ENCODE measurements at regions of chr18 and their contacts with region 1.

Region 1: DNA sequence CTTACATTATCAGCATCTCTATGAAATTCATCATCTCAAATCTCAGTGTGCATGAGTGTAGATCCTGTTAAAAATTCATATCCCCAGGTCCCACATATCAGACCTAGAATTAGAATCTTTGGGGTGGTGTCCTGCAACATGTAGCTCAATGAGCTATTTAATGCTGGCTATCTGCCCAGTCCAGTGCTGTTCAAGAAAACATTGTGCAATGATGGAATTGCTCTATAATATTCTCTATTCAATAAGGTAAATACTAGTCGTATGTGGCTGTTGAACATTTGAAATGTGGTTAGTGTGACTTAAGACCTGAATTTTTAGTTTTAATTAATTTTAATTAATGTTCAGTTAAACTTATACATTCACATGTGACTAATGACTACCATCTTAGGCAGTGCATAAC is 127.4 kb downstream of the NOL4 start:
- DNase-seq: no peak
- H3K4me3 Mint-ChIP-seq: no peak overlapping the region
- H3K27ac Mint-ChIP-seq: no peak overlapping the region
- H3K4me1 Mint-ChIP-seq: peaks cover 8% of the 10 kb centered on the region
- H3K27me3 Mint-ChIP-seq: no peaks in the 10 kb centered on the region
- CTCF ChIP-seq: no peak

Region 2: GRCh38 chr18:34061226-34061625 is 36.1 kb before region 1 on chr18:
- CTCF ChIA-PET with region 1: no interaction called
- intact Hi-C with region 1: no loop called
- DNase-seq: no peak
- H3K4me3 Mint-ChIP-seq: no peak overlapping the region
- H3K27ac Mint-ChIP-seq: no peak overlapping the region
- H3K4me1 Mint-ChIP-seq: no peaks in the 10 kb centered on the region
- H3K27me3 Mint-ChIP-seq: no peaks in the 10 kb centered on the region
- CTCF ChIP-seq: no peak

Region 3: DNA sequence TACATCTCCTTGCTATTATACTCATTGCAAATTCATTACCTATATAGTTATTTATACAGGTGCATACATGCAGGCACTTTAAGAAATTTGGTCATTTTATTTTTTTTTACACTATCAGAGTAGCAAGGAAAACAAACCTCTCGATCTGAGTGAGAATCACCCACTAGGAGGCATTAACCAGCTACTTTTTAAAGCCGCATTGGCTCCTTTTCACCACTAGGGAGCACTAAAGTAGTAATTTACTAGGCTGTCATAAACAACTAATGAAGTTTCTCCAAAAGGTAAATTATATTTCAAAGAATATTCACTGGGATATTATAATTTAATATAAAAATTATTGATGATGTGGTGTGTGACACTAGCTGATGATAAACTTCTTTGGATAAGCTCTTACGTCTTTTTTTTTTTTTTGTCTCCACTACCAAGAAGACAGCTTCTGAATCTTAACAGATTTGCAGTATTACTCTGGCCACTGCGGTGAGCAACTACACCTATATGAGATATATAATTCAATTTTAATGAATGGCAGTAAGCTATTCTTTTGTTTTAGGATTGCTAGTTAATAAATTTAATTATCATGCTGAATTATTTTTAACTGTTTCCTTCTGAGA is 25.5 kb after region 1 on chr18:
- CTCF ChIA-PET with region 1: interaction called, 12 read pairs
- intact Hi-C with region 1: no loop called
- DNase-seq: peak; percentile 30
- H3K4me3 Mint-ChIP-seq: no peak overlapping the region
- H3K27ac Mint-ChIP-seq: no peak overlapping the region
- H3K4me1 Mint-ChIP-seq: peaks cover 29% of the 10 kb centered on the region
- H3K27me3 Mint-ChIP-seq: no peaks in the 10 kb centered on the region
- CTCF ChIP-seq: peak; percentile 90

Measured in Calu3 (cell line).